ENCODE measurements at regions of chr11 and their contacts with region 1.

Region 1: DNA sequence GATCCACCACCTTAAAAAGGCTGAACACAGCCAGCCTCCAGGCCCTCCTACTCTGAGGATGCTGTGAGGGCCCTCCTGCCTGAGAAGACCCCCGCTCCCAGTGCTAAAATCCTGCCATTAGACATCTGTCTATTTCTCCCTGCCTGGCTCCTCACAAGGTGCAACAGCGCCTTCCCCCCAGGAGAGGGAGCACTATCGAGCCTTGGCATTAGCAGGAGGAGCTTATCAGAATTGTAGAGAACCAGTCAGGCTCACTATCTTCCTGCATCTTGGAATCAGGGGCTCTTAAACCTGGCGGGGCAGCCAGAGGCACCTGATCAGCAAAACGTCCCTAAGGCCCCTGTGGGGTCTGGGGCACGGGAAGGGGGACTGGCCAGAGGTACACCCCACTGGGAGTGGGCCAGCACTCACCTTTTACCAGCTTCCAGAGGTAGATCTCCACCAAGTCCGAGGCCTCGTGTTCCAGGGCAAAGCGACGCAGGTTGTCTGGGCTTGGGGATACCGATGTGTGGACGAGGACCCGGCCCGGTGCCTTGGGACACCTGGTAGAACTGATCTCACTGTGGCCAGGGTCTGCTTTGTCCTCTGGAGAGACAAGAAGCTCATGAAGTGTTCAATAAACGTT is 28.7 kb downstream of the CHRDL2 start:
- DNase-seq: peak; percentile 20 to 74 (median 45)
- ATAC-seq: peak; percentile 76
- H3K4me3 ChIP-seq: no peak overlapping the region
- H3K4me3 Mint-ChIP-seq: no peak overlapping the region
- H3K27ac ChIP-seq: no peak overlapping the region
- H3K27ac Mint-ChIP-seq: no peak overlapping the region
- H3K4me1 ChIP-seq: no peaks in the 10 kb centered on the region
- H3K4me1 Mint-ChIP-seq: no peaks in the 10 kb centered on the region
- H3K27me3 ChIP-seq: no peaks in the 10 kb centered on the region
- H3K27me3 Mint-ChIP-seq: peaks cover 3% of the 10 kb centered on the region
- CTCF ChIP-seq: peak; percentile 85

Region 2: DNA sequence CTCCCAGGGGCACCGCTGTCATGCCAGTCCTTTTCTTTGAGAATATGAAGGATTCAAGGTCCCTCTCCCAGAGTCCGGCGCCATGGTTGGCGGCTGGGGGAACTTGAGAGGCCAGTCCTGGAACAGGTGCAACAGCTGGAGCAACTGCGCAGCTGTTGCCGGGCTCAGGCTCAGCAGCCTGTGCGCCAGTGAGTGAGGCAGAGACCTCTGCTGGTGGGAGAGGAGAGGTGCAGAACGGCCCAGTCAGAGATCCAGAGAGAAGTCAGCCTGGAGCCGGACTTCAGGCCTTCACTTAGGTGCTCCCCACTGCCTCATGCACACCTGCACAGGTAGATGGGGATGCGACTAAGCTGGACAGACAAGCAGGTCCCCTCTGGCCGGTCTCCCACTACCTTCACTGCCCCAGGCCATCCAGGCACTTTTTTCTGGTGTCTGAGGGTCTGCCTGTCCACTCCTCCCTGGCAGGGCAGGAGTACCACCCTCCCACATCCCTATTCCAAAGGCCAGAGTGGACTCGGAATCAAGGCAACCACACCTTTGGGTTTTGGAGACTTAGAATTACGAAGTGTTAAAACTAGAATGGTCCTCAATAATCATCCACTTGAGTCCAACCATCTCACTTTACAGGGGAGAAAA is 24.2 kb after region 1 on chr11:
- CTCF ChIA-PET with region 1: interaction called, 14 read pairs
- POLR2A ChIA-PET with region 1: no interaction called
- intact Hi-C with region 1: loop called in 1 of 2 experiments (anchors 2 kb)
- DNase-seq: peak; percentile 21 to 77 (median 48)
- ATAC-seq: peak; percentile 99
- H3K4me3 ChIP-seq: no peak overlapping the region
- H3K4me3 Mint-ChIP-seq: no peak overlapping the region
- H3K27ac ChIP-seq: no peak overlapping the region
- H3K27ac Mint-ChIP-seq: no peak overlapping the region
- H3K4me1 ChIP-seq: peaks cover 10% of the 10 kb centered on the region
- H3K4me1 Mint-ChIP-seq: no peaks in the 10 kb centered on the region
- H3K27me3 ChIP-seq: peaks cover 14 to 16% of the 10 kb centered on the region in 2 experiments
- H3K27me3 Mint-ChIP-seq: peaks cover 34% of the 10 kb centered on the region
- CTCF ChIP-seq: peak; percentile 83

Region 3: DNA sequence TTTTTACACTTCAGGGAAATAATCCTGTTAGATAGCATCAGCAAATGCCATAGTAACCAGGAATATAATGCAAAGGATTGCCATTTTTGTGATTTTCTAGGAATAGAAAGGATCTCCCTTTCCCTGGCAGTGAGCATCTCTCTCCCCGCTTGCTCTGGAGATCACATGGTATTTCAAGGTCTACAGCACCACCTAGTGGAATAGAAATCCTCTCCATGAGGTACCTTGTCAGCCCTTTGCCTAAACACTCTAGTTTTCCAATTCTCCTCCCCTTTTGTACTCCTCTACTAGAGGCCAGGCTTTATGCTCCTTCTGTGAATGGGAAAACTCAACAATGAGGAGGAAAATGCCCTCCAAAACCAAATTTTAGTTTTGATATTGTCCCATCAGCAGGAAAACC is 168.0 kb after region 1 on chr11:
- CTCF ChIA-PET with region 1: no interaction called
- POLR2A ChIA-PET with region 1: no interaction called
- intact Hi-C with region 1: loop called (anchors 10 kb)
- DNase-seq: peak in 2 of 14 experiments; percentile 26 to 33
- ATAC-seq: no peak
- H3K4me3 ChIP-seq: no peak overlapping the region
- H3K4me3 Mint-ChIP-seq: no peak overlapping the region
- H3K27ac ChIP-seq: no peak overlapping the region
- H3K27ac Mint-ChIP-seq: no peak overlapping the region
- H3K4me1 ChIP-seq: no peaks in the 10 kb centered on the region
- H3K4me1 Mint-ChIP-seq: no peaks in the 10 kb centered on the region
- H3K27me3 ChIP-seq: no peaks in the 10 kb centered on the region
- H3K27me3 Mint-ChIP-seq: no peaks in the 10 kb centered on the region
- CTCF ChIP-seq: no peak

Measured in CD4-positive, alpha-beta T cell (primary cell).